Thyroid gland (tissue), 4 donors: ENCODE measurements at regions of chr5 and their contacts with region 1.

Region 1: DNA sequence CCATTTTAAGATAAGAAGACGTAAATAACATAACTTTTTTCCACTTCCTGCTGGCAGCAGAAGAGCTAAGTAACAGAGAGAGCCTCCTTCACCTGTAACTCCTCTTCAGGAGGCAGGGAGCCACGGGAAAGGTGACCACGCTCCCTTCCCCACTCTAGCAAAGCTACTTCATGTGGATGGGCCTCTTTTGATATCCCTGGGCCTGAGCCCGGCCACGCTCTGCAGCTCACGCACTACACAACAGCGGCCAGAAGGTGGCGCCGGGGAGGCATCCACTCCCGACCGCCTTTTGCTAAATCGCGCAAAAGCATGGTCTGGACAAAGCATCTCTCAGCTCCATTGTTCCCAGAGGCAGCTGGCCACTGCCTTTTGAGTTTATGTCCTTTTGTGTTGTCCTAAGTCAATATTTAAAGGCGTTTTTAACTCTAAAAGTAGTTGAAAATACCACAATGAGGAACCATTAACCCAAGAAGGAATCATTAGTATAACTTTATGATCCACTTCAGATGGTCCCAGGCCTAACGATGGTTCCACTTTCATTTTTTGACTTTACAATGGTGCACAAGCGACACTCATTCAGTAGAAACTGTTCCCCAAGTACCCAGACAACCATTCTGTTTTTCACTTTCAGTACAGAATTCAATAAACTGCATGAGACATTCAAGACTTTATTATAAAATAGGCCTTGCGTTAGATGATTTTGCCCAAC is 23.6 kb downstream of the CMBL start:
- DNase-seq: peak; percentile 95 to 96
- H3K4me3 ChIP-seq: no peak overlapping the region
- H3K27ac ChIP-seq: no peak overlapping the region
- H3K4me1 ChIP-seq: peaks cover 18 to 20% of the 10 kb centered on the region in 2 donors
- H3K27me3 ChIP-seq: no peaks in the 10 kb centered on the region
- CTCF ChIP-seq: peak; percentile 71 to 97 (median 92)
- POLR2A ChIP-seq: no peak

Region 2: DNA sequence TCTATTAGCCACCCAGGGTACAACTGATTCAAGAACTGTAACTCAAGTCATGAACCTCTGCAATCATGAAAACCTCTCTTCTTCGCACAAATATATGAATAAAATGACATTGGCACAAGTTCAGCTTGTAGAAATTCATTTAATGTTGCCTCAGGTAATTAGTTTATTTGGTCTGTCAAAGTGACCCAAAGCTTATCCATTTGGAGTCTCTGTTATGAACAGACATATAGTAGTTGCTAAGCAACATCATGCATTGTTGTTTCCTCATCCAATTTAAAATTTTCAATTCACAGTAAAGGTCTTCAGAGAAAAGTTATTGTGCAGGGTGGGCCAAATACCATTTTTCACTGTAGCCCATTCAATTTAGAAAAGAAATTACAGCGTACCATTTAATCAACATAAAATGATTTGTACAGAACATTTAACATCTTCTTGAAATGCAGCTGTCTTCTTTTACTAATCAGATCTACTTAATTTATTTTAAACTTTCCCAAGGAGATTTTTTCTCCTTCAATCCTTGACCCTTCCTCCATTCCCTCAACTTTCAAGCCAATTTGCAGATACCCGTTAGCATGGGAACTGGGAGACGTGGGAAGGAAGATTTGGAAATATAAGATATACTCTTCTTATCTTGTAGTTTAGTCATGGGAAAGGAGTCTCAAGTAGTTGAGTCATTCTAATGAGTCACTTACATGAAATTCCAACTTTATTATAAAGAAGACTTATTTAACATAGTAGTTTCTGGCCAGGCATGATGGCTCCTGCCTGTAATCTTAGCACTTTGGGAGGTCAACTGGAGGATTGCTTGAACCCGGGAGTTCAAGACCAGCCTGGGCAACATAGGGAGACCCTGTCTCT is 265.6 kb before region 1 on chr5:
- intact Hi-C with region 1: no loop called
- DNase-seq: no peak
- H3K4me3 ChIP-seq: no peak overlapping the region
- H3K27ac ChIP-seq: no peak overlapping the region
- H3K4me1 ChIP-seq: no peaks in the 10 kb centered on the region
- H3K27me3 ChIP-seq: no peaks in the 10 kb centered on the region
- CTCF ChIP-seq: no peak
- POLR2A ChIP-seq: no peak

Region 3: GRCh38 chr5:10424124-10424731 is 140.1 kb after region 1 on chr5:
- intact Hi-C with region 1: loop called (anchors 10 kb)
- DNase-seq: peak; percentile 36 to 38
- H3K4me3 ChIP-seq: no peak overlapping the region
- H3K27ac ChIP-seq: no peak overlapping the region
- H3K4me1 ChIP-seq: no peaks in the 10 kb centered on the region
- H3K27me3 ChIP-seq: no peaks in the 10 kb centered on the region
- CTCF ChIP-seq: peak in 5 of 6 experiments; percentile 20 to 55 (median 44)
- POLR2A ChIP-seq: no peak

Region 4: DNA sequence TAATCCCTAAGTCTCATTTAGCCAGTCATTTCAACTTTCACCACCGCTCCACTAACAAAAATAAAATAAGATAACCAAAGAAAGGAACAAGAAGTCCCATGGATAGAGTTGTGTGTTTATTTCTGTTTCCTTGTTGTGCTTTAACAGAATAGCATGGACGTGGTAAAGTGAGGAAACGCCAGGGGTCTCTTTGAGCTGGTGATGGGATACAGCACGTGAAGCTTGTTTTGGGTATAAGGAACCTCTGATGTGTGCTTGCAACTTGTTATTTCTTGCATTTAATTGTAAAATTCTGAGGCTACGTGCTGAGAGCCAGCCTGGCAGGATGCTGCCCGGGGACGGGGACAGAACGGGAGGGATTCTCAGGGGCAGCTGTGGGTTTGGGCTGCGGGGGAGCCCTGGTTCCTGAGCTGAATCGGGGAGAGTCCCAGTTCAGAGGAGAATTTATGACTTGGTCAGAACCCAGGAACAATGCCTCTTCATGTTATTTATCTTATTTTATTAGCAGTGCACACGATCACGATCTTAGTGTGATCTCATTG is 343.1 kb after region 1 on chr5:
- intact Hi-C with region 1: loop called (anchors 10 kb)
- DNase-seq: no peak
- H3K4me3 ChIP-seq: no peak overlapping the region
- H3K27ac ChIP-seq: no peak overlapping the region
- H3K4me1 ChIP-seq: peaks cover 0 to 5% of the 10 kb centered on the region in 2 donors
- H3K27me3 ChIP-seq: no peaks in the 10 kb centered on the region
- CTCF ChIP-seq: no peak
- POLR2A ChIP-seq: no peak